Prostate gland (tissue), 2 donors: ENCODE measurements at regions of chr18 and their contacts with region 1.

Region 1: GRCh38 chr18:22800551-22800951 is 132.6 kb upstream of the RBBP8 start:
- DNase-seq: no peak
- H3K4me3 ChIP-seq: no peak overlapping the region
- H3K27ac ChIP-seq: peak overlapping the region in 1 of 2 donors; percentile 9
- H3K4me1 ChIP-seq: no peaks in the 10 kb centered on the region
- H3K27me3 ChIP-seq: no peaks in the 10 kb centered on the region
- CTCF ChIP-seq: no peak
- POLR2A ChIP-seq: no peak

Region 2: GRCh38 chr18:22983175-22983574 is 182.6 kb after region 1 on chr18:
- intact Hi-C with region 1: loop called (anchors 2 kb)
- DNase-seq: no peak
- H3K4me3 ChIP-seq: no peak overlapping the region
- H3K27ac ChIP-seq: no peak overlapping the region
- H3K4me1 ChIP-seq: no peaks in the 10 kb centered on the region
- H3K27me3 ChIP-seq: no peaks in the 10 kb centered on the region
- CTCF ChIP-seq: peak in 3 of 4 experiments; percentile 49 to 66 (median 66)
- POLR2A ChIP-seq: no peak